Aorta (tissue), 5 donors: ENCODE measurements at regions of chr11 and their contacts with region 1.

Region 1: DNA sequence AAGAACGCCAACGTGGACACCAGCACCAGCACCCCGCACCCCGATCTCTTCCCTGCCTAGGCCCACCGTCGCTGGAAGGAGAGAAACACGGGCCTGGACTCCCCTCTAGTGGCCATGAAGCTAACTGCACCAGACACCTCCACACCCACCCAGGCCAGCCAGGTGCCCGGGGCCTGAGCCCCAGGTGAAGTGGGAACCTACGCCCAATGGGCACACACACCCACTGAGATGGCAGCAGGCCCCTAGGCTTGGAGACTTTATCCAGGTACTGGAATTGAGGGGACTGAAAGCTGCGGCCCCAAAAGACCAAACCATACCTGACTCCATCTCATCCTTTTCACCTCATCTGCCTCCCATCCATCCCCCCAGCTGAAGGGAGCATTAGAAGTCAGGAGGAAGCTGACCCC is 81.0 kb downstream of the BUD13 start:
- DNase-seq: peak in 1 of 2 donors; percentile 78
- ATAC-seq: peak; percentile 55
- H3K4me3 ChIP-seq: no peak overlapping the region
- H3K27ac ChIP-seq: no peak overlapping the region
- H3K4me1 ChIP-seq: no peaks in the 10 kb centered on the region
- H3K27me3 ChIP-seq: no peaks in the 10 kb centered on the region

Region 2: GRCh38 chr11:115334932-115335788 is 1356.6 kb before region 1 on chr11:
- intact Hi-C with region 1: loop called in 1 of 2 experiments (anchors 10 kb)
- DNase-seq: no peak
- ATAC-seq: no peak
- H3K4me3 ChIP-seq: no peak overlapping the region
- H3K27ac ChIP-seq: no peak overlapping the region
- H3K4me1 ChIP-seq: peaks cover 0 to 1% of the 10 kb centered on the region in 2 donors
- H3K27me3 ChIP-seq: no peaks in the 10 kb centered on the region

Region 3: GRCh38 chr11:116459185-116460045 is 232.4 kb before region 1 on chr11:
- intact Hi-C with region 1: loop called in 1 of 2 experiments (anchors 5 kb)
- DNase-seq: no peak
- ATAC-seq: no peak
- H3K4me3 ChIP-seq: no peak overlapping the region
- H3K27ac ChIP-seq: no peak overlapping the region
- H3K4me1 ChIP-seq: no peaks in the 10 kb centered on the region
- H3K27me3 ChIP-seq: no peaks in the 10 kb centered on the region

Region 4: GRCh38 chr11:116513894-116514293 is 177.9 kb before region 1 on chr11:
- intact Hi-C with region 1: loop called in 1 of 2 experiments (anchors 5 kb)
- DNase-seq: peak in 1 of 2 donors; percentile 56
- ATAC-seq: no peak
- H3K4me3 ChIP-seq: no peak overlapping the region
- H3K27ac ChIP-seq: no peak overlapping the region
- H3K4me1 ChIP-seq: no peaks in the 10 kb centered on the region
- H3K27me3 ChIP-seq: no peaks in the 10 kb centered on the region

Region 5: GRCh38 chr11:116787786-116788486 is 96.2 kb after region 1 on chr11 and contains the start of gene ZPR1:
- intact Hi-C with region 1: no loop called
- DNase-seq: peak; percentile 91 to 95
- ATAC-seq: peak; percentile 92
- H3K4me3 ChIP-seq: peak within 1 kb of the TSS; percentile 73 to 80
- H3K27ac ChIP-seq: peak within 1 kb of the TSS in 1 of 2 donors; percentile 66
- H3K4me1 ChIP-seq: peaks cover 0 to 4% of the 10 kb centered on the region in 2 donors
- H3K27me3 ChIP-seq: no peaks in the 10 kb centered on the region
- total RNA-seq, gene ZPR1: 31.5 to 48.2 TPM

Region 6: DNA sequence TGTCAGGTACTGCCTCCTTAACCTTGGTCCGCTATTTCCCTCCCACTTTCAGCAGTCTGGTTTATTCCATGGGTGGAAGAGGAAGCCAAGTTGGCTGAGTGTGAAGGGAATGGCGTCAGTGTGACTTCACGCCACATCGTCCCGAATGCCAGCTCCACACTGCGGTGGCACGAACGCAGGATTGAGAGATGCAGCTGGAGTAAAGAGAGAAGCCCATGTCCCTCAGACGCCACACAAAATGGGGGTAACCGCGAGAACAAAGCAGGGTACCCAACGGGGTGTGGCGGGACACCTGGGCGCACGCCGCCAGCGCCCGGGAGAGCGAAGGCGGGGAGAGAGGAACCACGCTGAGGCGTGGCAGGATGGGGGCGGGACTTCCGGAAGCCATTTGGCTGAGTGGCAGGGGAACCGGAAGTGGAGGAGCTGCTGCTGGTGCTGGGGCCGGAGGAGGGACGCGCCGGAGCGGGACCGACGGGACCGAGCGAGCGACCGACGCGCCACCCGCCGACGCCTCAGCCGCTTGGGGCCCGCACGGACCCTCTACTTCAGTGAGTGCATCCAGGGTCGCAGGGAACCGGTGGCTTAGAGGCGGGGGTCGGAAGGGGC is 452.2 kb after region 1 on chr11 and contains the start of gene PAFAH1B2:
- intact Hi-C with region 1: no loop called
- DNase-seq: peak; percentile 97 to 98
- ATAC-seq: peak; percentile 99
- H3K4me3 ChIP-seq: peak within 1 kb of the TSS; percentile 70 to 80
- H3K27ac ChIP-seq: peak within 1 kb of the TSS; percentile 71 to 88
- H3K4me1 ChIP-seq: peaks cover 0 to 2% of the 10 kb centered on the region in 2 donors
- H3K27me3 ChIP-seq: no peaks in the 10 kb centered on the region
- total RNA-seq, gene PAFAH1B2: 69.9 to 73.5 TPM